Activated CD4-positive, alpha-beta memory T cell treated with anti-CD3 and anti-CD28 coated beads for 36 hours (primary cell): ENCODE measurements at regions of chr5 and their contacts with region 1.

Region 1: DNA sequence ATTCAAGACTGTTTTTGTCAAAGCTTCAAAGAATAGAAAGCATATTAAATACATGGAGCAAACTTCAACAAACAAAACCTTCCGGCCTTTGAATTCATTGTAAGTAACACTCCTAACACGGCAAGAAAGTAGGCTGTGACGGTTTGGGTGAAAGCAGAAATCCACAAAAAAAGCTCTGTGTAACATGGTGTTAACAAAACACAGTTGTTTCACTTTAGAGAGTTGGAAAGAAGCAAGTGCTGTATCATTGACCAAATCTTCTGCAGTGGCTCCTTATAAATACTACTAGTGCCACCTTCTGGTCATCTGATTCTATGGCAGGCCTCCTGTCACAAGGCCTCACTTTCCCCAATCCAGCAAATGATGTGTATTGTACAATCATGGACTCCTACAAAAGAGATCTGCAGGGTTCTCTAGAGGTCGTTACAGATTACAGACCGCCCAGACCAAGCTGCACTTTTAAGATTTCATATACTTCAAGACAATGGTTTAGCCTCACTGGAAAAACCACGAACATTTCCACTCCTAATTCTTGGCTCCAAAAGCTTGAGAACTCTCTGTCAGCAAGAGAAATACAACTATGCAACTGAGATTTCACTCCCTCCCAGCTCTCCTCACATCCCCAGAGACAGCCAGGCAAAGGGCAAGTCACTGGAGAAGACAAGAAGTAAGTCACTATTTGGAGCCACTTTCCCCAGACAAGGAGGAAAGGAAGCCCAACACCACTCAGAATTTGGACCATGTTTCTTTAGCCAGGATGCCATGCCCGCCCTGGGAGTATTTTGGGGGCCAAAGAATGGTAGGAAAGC is 196.2 kb downstream of the DTWD2 start:
- DNase-seq: peak; percentile 18
- H3K4me3 Mint-ChIP-seq: no peak overlapping the region
- H3K27ac Mint-ChIP-seq: no peak overlapping the region
- H3K4me1 Mint-ChIP-seq: no peaks in the 10 kb centered on the region
- H3K27me3 Mint-ChIP-seq: peaks cover 2% of the 10 kb centered on the region

Region 2: DNA sequence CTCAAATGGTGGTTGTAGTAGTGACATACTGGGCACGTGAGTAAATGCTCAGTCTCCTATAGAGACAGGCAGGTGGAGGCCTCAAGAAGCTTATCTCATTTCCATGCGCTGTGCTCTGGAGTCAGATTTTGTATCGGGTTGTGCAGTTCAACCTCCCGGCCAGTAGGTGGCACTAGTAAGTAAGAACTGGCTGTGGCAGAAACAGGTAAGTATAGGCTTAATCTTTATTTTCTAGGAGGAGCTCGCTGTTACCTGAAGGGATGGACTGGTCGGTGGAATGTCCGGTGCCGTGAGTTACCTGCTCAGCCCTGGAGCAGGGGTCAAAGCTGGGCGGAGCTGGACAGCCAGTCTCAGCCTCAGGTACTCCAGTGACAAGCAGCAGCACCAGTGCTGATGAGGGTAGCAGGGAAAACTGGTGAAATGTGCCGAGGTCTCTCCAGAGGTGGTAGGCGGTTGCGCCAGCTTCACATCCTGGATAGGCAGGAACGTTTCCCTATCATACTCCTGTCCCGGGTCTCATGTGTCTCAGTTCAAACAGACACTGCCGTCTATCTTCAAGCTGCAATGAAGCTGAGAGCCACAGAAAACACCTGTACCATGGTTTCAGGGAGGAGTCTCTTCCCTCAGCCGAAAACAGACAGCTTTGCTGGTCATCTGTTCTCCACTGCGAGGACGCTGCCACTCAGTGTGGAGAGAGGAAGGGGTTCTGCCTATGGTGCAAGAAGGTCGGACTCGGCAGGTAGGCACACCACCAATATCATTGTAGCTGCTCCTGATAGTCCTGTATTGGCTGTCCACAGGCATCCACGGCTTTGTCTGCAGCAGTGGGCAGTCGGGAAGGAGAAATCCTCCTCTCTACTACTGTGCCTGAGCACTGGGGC is 1337.2 kb before region 1 on chr5:
- CTCF ChIA-PET with region 1: interaction called, 33 read pairs
- POLR2A ChIA-PET with region 1: no interaction called
- intact Hi-C with region 1: loop called (anchors 2 kb)
- DNase-seq: peak; percentile 66
- H3K4me3 Mint-ChIP-seq: peak overlapping the region; percentile 64
- H3K27ac Mint-ChIP-seq: no peak overlapping the region
- H3K4me1 Mint-ChIP-seq: peaks cover 5% of the 10 kb centered on the region
- H3K27me3 Mint-ChIP-seq: peaks cover 5% of the 10 kb centered on the region

Region 3: GRCh38 chr5:118270526-118270925 is 521.6 kb before region 1 on chr5:
- CTCF ChIA-PET with region 1: no interaction called
- POLR2A ChIA-PET with region 1: no interaction called
- intact Hi-C with region 1: no loop called
- DNase-seq: no peak
- H3K4me3 Mint-ChIP-seq: no peak overlapping the region
- H3K27ac Mint-ChIP-seq: no peak overlapping the region
- H3K4me1 Mint-ChIP-seq: no peaks in the 10 kb centered on the region
- H3K27me3 Mint-ChIP-seq: no peaks in the 10 kb centered on the region

Region 4: DNA sequence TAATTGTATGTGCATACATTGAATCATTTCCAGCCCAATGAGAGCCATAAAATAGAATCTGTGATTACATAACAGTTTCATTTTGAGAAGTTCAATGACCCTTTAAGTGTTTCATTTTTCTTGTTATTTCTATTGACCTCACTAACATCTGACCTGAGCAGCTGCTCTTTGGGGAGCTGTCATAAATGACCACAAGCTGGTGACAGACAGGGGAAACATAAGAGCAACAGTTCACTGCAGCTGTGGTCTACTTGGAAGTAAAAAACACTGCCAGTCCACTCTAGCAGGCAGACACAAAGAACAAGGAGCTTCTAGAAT is 69.2 kb before region 1 on chr5:
- CTCF ChIA-PET with region 1: no interaction called
- POLR2A ChIA-PET with region 1: no interaction called
- intact Hi-C with region 1: no loop called
- DNase-seq: no peak
- H3K4me3 Mint-ChIP-seq: no peak overlapping the region
- H3K27ac Mint-ChIP-seq: no peak overlapping the region
- H3K4me1 Mint-ChIP-seq: no peaks in the 10 kb centered on the region
- H3K27me3 Mint-ChIP-seq: no peaks in the 10 kb centered on the region